ENCODE measurements at regions of chr15 and their contacts with region 1.

Region 1: DNA sequence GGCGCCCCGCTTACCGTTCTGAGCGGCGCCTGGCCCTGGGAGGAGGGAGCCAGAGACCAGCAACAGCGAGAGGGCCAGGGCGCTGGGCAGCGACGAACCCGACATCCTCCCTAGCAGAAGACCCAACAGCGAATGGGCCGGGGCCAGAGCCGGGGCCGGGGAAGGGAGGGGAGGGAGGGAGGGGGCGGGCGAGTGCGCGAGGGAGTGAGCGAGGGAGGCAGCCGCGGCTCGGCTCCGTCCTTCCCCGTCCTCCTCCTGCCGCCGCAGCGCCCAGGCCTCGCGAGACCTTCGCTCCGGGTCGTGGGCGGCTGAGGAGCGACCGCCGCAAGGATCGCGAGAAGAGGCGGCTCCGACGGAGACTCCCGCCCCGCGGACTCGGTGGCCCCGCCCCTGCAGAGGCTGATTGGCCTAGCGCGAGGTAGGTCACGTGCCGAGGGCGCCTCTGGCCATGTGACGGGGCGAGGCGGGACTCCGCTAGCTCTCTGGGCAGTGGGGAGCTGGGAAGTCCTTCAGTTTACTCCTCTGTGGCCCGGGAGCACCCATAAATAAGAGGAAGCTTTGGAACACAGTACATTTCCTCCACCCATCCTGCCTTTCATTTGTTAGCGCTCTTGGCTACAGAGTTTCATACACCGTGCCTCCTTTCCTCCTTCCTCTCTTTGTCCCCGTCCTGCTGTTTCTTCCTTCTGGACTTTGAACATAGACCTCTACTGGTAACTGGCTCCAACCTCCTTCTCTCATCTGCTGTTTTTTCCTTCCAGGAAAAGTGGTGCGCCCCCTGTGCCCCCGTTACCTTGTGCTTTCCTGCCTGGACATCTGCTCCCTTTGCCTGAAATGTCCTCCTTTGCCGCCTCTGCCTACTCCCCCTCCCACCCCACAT is at the start of gene NPTN:
- DNase-seq: peak; percentile 99 to 100
- ATAC-seq: peak; percentile 96 to 98 (median 97)
- H3K4me3 ChIP-seq: peak within 1 kb of the TSS; percentile 85
- H3K27ac ChIP-seq: peak within 1 kb of the TSS; percentile 81
- H3K4me1 ChIP-seq: peaks cover 42% of the 10 kb centered on the region
- H3K27me3 ChIP-seq: no peaks in the 10 kb centered on the region
- CTCF ChIP-seq: no peak
- total RNA-seq, gene NPTN: 28.8 to 40.8 (median 32.6) TPM

Region 2: GRCh38 chr15:73584699-73585420 is 48.5 kb before region 1 on chr15:
- intact Hi-C with region 1: no loop called
- DNase-seq: no peak
- ATAC-seq: no peak
- H3K4me3 ChIP-seq: no peak overlapping the region
- H3K27ac ChIP-seq: no peak overlapping the region
- H3K4me1 ChIP-seq: no peaks in the 10 kb centered on the region
- H3K27me3 ChIP-seq: no peaks in the 10 kb centered on the region
- CTCF ChIP-seq: no peak

Region 3: GRCh38 chr15:73599934-73600333 is 33.4 kb before region 1 on chr15:
- intact Hi-C with region 1: loop called in 1 of 2 experiments (anchors 5 kb)
- DNase-seq: no peak
- ATAC-seq: no peak
- H3K4me3 ChIP-seq: no peak overlapping the region
- H3K27ac ChIP-seq: no peak overlapping the region
- H3K4me1 ChIP-seq: peaks cover 81% of the 10 kb centered on the region
- H3K27me3 ChIP-seq: no peaks in the 10 kb centered on the region
- CTCF ChIP-seq: no peak

Region 4: DNA sequence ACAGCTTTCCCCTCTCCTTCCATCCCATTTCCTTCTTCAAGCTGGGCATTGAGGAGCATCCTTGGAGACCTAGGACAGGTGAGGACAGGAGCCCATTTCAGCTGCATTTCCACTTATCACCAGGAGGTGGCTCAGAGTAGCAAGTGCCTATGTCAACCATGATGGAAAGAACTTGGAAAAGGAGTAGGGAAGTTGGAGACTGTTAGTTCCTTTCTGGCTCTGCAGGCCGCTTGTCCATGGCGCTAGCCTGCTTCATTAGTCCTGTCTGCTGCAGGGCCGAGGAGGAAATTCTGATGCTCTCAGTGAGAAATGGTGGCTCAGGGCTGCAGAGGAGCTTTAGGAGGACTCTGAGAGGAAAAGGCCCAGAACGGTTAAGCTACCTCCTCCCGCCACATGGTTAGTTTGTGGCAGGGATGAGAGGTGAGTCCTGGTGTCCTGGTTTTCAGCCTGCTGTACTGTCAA is 43.8 kb after region 1 on chr15:
- intact Hi-C with region 1: loop called in 1 of 2 experiments (anchors 5 kb)
- DNase-seq: peak; percentile 46 to 64
- ATAC-seq: peak; percentile 86 to 94 (median 92)
- H3K4me3 ChIP-seq: no peak overlapping the region
- H3K27ac ChIP-seq: no peak overlapping the region
- H3K4me1 ChIP-seq: no peaks in the 10 kb centered on the region
- H3K27me3 ChIP-seq: peaks cover 0 to 4% (median 1%) of the 10 kb centered on the region in 3 donors
- CTCF ChIP-seq: peak; percentile 91

Region 5: DNA sequence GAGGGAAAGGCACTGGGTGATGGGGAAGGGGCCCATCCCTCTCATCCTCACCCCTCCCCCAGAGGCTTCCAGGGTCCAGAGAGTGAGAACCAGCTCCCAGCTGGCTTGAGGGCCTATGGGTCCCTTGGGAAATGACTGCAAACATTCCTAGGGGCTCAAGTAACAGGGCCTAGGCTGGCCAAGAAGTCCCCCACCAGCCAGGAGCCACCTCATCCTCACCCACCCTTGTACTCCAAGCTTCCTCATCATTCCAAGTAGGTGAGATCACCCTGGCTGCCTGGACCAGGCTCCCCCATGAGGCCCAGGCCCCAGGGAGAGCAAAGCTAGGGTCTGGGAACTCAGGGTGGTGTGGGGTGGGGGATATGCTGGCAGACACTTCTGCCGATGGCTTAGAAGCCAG is 307.7 kb after region 1 on chr15:
- intact Hi-C with region 1: no loop called
- DNase-seq: peak in 1 of 2 donors; percentile 50
- ATAC-seq: peak in 3 of 4 donors; percentile 24 to 49 (median 31)
- H3K4me3 ChIP-seq: no peak overlapping the region
- H3K27ac ChIP-seq: no peak overlapping the region
- H3K4me1 ChIP-seq: no peaks in the 10 kb centered on the region
- H3K27me3 ChIP-seq: no peaks in the 10 kb centered on the region
- CTCF ChIP-seq: no peak